ENCODE measurements at regions of chr5 and their contacts with region 1.

Region 1: GRCh38 chr5:132064738-132065331 is 4.4 kb downstream of the IL3 start:
- DNase-seq: peak; percentile 90
- H3K4me3 Mint-ChIP-seq: no peak overlapping the region
- H3K27ac Mint-ChIP-seq: no peak overlapping the region
- H3K4me1 Mint-ChIP-seq: no peaks in the 10 kb centered on the region
- H3K27me3 Mint-ChIP-seq: no peaks in the 10 kb centered on the region
- CTCF ChIP-seq: peak; percentile 95

Region 2: GRCh38 chr5:131296213-131296672 is 768.6 kb before region 1 on chr5:
- CTCF ChIA-PET with region 1: no interaction called
- intact Hi-C with region 1: no loop called
- DNase-seq: no peak
- H3K4me3 Mint-ChIP-seq: no peak overlapping the region
- H3K27ac Mint-ChIP-seq: no peak overlapping the region
- H3K4me1 Mint-ChIP-seq: peaks cover 9% of the 10 kb centered on the region
- H3K27me3 Mint-ChIP-seq: no peaks in the 10 kb centered on the region
- CTCF ChIP-seq: no peak

Region 3: GRCh38 chr5:131423056-131423455 is 641.8 kb before region 1 on chr5:
- CTCF ChIA-PET with region 1: no interaction called
- intact Hi-C with region 1: loop called (anchors 5 kb)
- DNase-seq: no peak
- H3K4me3 Mint-ChIP-seq: no peak overlapping the region
- H3K27ac Mint-ChIP-seq: no peak overlapping the region
- H3K4me1 Mint-ChIP-seq: no peaks in the 10 kb centered on the region
- H3K27me3 Mint-ChIP-seq: no peaks in the 10 kb centered on the region
- CTCF ChIP-seq: peak; percentile 54

Region 4: GRCh38 chr5:131589510-131590348 is 475.1 kb before region 1 on chr5:
- CTCF ChIA-PET with region 1: interaction called, 7 read pairs
- intact Hi-C with region 1: loop called (anchors 1 kb)
- DNase-seq: peak; percentile 30
- H3K4me3 Mint-ChIP-seq: no peak overlapping the region
- H3K27ac Mint-ChIP-seq: no peak overlapping the region
- H3K4me1 Mint-ChIP-seq: peaks cover 24% of the 10 kb centered on the region
- H3K27me3 Mint-ChIP-seq: no peaks in the 10 kb centered on the region
- CTCF ChIP-seq: peak; percentile 86

Region 5: GRCh38 chr5:131810510-131811249 is 254.2 kb before region 1 on chr5:
- CTCF ChIA-PET with region 1: interaction called, 3 read pairs
- intact Hi-C with region 1: loop called (anchors 1 kb)
- DNase-seq: peak; percentile 19
- H3K4me3 Mint-ChIP-seq: no peak overlapping the region
- H3K27ac Mint-ChIP-seq: no peak overlapping the region
- H3K4me1 Mint-ChIP-seq: peaks cover 10% of the 10 kb centered on the region
- H3K27me3 Mint-ChIP-seq: no peaks in the 10 kb centered on the region
- CTCF ChIP-seq: no peak

Region 6: GRCh38 chr5:132134384-132134783 is 69.5 kb after region 1 on chr5:
- CTCF ChIA-PET with region 1: interaction called, 4 read pairs
- intact Hi-C with region 1: loop called (anchors 1 kb)
- DNase-seq: peak; percentile 25
- H3K4me3 Mint-ChIP-seq: no peak overlapping the region
- H3K27ac Mint-ChIP-seq: no peak overlapping the region
- H3K4me1 Mint-ChIP-seq: no peaks in the 10 kb centered on the region
- H3K27me3 Mint-ChIP-seq: peaks cover 43% of the 10 kb centered on the region
- CTCF ChIP-seq: peak; percentile 51

Region 7: DNA sequence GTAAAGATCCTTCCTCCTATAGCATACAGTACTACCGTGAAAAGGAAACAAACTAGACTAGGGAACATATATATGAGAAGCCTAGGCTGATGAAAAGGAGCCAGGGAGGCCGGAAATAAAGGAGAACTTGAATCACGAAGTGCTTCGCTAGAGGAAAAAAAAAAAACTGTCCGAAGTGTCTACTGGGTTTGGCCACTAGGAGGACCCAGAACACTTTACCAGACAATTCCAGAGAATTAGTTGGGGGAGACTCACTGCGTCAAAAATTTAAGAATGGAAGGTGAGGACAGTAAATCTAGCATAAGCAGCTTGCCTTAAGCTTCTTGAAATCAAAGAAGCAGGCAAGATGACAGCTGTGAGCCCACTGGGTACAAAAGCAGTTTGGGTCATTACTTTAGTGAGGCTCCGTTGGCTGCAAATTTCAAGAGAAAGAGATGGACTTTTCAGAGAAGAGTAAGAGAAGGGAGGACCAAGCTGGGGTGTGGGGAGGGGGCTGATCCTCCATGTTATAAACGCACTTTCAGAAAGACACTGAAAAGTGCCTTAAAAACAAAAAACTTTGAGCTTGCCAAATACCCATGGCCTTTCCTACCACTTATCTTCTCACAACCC is 115.4 kb after region 1 on chr5:
- CTCF ChIA-PET with region 1: no interaction called
- intact Hi-C with region 1: loop called (anchors 5 kb)
- DNase-seq: peak; percentile 58
- H3K4me3 Mint-ChIP-seq: no peak overlapping the region
- H3K27ac Mint-ChIP-seq: no peak overlapping the region
- H3K4me1 Mint-ChIP-seq: peaks cover 11% of the 10 kb centered on the region
- H3K27me3 Mint-ChIP-seq: no peaks in the 10 kb centered on the region
- CTCF ChIP-seq: peak; percentile 62

Measured in Calu3 (cell line).